Colonic mucosa (tissue), 4 donors: ENCODE measurements at regions of chr4 and their contacts with region 1.

Region 1: GRCh38 chr4:27327421-27328181 is 467.0 kb downstream of the STIM2 start:
- DNase-seq: no peak
- H3K4me3 ChIP-seq: no peak overlapping the region
- H3K27ac ChIP-seq: no peak overlapping the region
- H3K4me1 ChIP-seq: no peaks in the 10 kb centered on the region
- H3K27me3 ChIP-seq: no peaks in the 10 kb centered on the region
- CTCF ChIP-seq: no peak

Region 2: DNA sequence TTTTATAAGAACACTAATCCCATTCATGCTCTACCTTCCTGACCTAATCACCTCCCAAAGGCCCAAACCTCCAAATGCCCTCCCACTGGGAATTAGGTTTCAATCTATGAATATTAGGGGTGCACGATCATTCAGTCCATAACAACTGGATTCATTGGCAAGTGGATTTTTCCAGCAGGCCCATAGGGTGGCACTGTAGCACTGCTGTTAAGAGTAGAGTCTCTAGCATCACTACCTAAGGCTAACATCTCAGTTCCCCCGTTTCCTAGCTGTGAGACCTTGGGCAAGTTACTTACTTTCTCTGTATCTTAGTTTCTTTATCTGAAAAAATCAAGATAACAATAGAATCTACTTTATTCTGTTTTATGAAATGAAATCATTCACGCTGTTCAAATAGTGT is 151.2 kb before region 1 on chr4:
- intact Hi-C with region 1: loop called (anchors 10 kb)
- DNase-seq: peak; percentile 30
- H3K4me3 ChIP-seq: no peak overlapping the region
- H3K27ac ChIP-seq: no peak overlapping the region
- H3K4me1 ChIP-seq: no peaks in the 10 kb centered on the region
- H3K27me3 ChIP-seq: no peaks in the 10 kb centered on the region
- CTCF ChIP-seq: peak; percentile 31